ENCODE measurements at regions of chr3 and their contacts with region 1.

Region 1: DNA sequence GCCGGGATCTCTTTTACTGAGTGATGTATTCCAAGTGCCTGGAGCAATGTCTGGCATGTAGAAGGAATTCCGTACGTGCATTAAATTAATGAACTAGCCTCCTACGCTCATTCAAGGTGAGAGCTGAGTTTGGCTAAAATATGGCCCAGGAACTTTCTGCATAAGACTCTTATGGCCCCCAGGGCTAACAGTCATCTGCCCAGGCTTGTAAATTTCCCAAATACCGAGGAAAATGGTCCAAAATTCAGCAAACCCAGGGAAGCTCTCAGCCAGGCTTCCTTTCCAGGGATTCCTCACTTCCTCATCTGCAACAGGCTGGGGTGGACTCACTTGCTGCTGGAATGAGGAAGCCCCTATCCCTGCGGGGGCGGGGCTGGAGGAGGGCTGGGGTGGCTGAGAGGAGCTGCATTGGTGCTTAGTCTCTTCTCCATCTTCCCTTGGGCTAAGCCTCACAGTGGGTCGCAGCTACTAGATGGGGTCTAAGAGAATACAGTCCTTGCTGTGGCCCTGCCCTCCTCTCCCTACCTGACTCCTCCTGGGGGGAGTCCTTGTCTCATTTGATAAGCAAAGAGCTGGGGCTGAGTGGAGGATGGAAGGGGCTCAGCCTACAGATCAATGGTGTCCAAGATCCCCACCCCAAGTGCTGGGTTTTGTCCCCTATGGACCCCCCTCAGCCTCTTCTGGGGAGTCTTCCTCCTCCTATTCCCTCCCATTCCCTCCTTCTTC is 28.5 kb upstream of the APOD start:
- DNase-seq: no peak
- ATAC-seq: no peak
- H3K4me3 Mint-ChIP-seq: no peak overlapping the region
- H3K27ac Mint-ChIP-seq: no peak overlapping the region
- H3K4me1 Mint-ChIP-seq: peaks cover 37% of the 10 kb centered on the region
- H3K27me3 Mint-ChIP-seq: no peaks in the 10 kb centered on the region

Region 2: GRCh38 chr3:195337747-195338146 is 274.5 kb before region 1 on chr3:
- CTCF ChIA-PET with region 1: no interaction called
- POLR2A ChIA-PET with region 1: no interaction called
- intact Hi-C with region 1: no loop called
- DNase-seq: no peak
- ATAC-seq: no peak
- H3K4me3 Mint-ChIP-seq: no peak overlapping the region
- H3K27ac Mint-ChIP-seq: no peak overlapping the region
- H3K4me1 Mint-ChIP-seq: peaks cover 5% of the 10 kb centered on the region
- H3K27me3 Mint-ChIP-seq: no peaks in the 10 kb centered on the region

Region 3: GRCh38 chr3:195558602-195559001 is 53.6 kb before region 1 on chr3:
- CTCF ChIA-PET with region 1: no interaction called
- POLR2A ChIA-PET with region 1: no interaction called
- intact Hi-C with region 1: loop called in 1 of 2 experiments (anchors 5 kb)
- DNase-seq: peak; percentile 39
- ATAC-seq: peak; percentile 65
- H3K4me3 Mint-ChIP-seq: no peak overlapping the region
- H3K27ac Mint-ChIP-seq: no peak overlapping the region
- H3K4me1 Mint-ChIP-seq: peaks cover 37% of the 10 kb centered on the region
- H3K27me3 Mint-ChIP-seq: no peaks in the 10 kb centered on the region

Region 4: GRCh38 chr3:195587824-195588223 is 24.4 kb before region 1 on chr3:
- CTCF ChIA-PET with region 1: interaction called, 4 read pairs
- POLR2A ChIA-PET with region 1: no interaction called
- intact Hi-C with region 1: loop called (anchors 1 to 2 kb)
- DNase-seq: no peak
- ATAC-seq: peak; percentile 24
- H3K4me3 Mint-ChIP-seq: no peak overlapping the region
- H3K27ac Mint-ChIP-seq: no peak overlapping the region
- H3K4me1 Mint-ChIP-seq: peaks cover 4% of the 10 kb centered on the region
- H3K27me3 Mint-ChIP-seq: peaks cover 5% of the 10 kb centered on the region

Region 5: GRCh38 chr3:195716865-195717210 is 104.6 kb after region 1 on chr3:
- CTCF ChIA-PET with region 1: no interaction called
- POLR2A ChIA-PET with region 1: no interaction called
- intact Hi-C with region 1: loop called in 1 of 2 experiments (anchors 5 kb)
- DNase-seq: no peak
- ATAC-seq: no peak
- H3K4me3 Mint-ChIP-seq: no peak overlapping the region
- H3K27ac Mint-ChIP-seq: no peak overlapping the region
- H3K4me1 Mint-ChIP-seq: peaks cover 6% of the 10 kb centered on the region
- H3K27me3 Mint-ChIP-seq: no peaks in the 10 kb centered on the region

Measured in activated CD4-positive, alpha-beta T cell treated with anti-CD3 and anti-CD28 coated beads for 36 hours (primary cell).